Activated CD4-positive, alpha-beta memory T cell treated with anti-CD3 and anti-CD28 coated beads for 36 hours (primary cell): ENCODE measurements at regions of chr1 and their contacts with region 1.

Region 1: DNA sequence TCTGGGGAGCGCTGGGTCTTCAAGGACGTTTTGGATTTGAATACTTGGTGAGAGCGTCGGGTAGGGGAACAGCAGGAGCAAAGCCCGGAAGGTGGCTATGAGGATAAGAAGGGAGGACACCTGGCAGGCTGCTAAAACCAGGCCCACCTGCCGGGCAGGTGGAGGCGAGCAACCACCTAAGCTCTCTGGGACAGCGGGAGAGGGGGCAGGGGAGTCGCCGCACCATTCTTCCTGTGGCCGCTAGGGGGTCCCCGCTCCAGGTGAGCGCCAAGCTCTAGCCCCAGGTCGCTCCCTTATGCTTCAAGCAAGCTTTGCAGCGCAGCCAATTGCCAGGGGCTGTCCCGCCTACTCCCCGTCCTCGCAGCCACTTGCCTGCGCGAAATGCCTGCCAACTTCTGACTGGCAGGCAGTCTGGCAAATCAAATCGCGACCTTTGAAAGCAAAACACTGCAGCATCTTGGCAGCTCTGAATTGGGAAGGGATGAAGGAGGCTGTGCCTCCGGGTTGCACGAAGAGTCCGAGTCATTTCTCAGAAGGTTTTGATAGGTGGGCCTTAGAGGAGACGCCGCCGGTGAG is at the start of gene NIPAL3:
- DNase-seq: peak; percentile 99
- H3K4me3 Mint-ChIP-seq: peak within 1 kb of the TSS; percentile 98
- H3K27ac Mint-ChIP-seq: peak within 1 kb of the TSS; percentile 89
- H3K4me1 Mint-ChIP-seq: peaks cover 51% of the 10 kb centered on the region
- H3K27me3 Mint-ChIP-seq: no peaks in the 10 kb centered on the region
- total RNA-seq, gene NIPAL3: 39.3 to 42.4 TPM

Region 2: DNA sequence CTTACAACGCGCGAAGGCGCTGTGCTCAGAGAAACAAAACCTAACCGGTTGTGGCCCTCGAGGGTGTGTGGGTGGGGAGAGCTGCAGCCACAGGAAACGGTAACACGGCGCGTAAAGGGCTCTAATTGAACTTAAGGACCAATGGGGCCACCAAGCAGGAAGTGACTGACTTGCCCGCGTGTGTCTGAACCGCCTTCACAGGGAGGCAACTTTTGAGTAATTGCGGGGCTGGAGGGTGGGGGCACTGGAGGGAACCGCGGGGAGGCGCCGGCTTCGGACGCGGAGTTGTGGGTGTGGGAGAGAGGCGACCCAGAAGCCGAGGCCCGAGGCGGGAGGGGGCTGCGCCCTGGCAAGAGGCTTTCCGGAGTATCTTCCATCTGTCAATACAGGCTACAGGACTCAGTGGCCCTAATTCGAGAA is 456.4 kb before region 1 on chr1:
- CTCF ChIA-PET with region 1: no interaction called
- POLR2A ChIA-PET with region 1: interaction called, 3 read pairs
- intact Hi-C with region 1: loop called (anchors 10 kb)
- DNase-seq: peak; percentile 97
- H3K4me3 Mint-ChIP-seq: peak overlapping the region; percentile 100
- H3K27ac Mint-ChIP-seq: peak overlapping the region; percentile 100
- H3K4me1 Mint-ChIP-seq: peaks cover 53% of the 10 kb centered on the region
- H3K27me3 Mint-ChIP-seq: no peaks in the 10 kb centered on the region

Region 3: DNA sequence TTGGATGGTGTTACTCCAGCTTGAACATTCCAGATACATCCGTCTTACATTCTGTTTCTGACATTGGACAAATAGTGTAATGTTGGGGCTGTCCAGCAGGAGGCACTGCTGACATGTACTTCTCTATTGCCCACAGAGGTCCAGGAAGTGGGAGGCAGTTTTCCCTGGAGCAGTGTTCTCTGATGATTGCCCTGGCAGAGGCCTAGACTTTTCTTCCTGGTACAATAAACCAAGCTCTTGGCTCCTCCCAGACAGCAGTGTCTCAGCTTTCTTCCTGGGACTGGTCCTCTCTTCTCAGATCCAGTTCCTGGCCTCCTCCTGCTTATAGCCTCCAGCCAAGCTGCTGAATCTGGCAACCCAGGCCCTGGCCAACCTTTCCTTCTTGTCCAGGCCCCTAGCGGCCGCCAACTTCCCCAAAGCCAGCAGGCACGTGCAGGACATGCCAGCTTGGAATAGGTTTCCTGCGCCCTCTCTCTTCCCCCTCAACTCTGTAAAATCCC is 213.4 kb before region 1 on chr1:
- CTCF ChIA-PET with region 1: interaction called, 32 read pairs
- POLR2A ChIA-PET with region 1: no interaction called
- intact Hi-C with region 1: no loop called
- DNase-seq: peak; percentile 76
- H3K4me3 Mint-ChIP-seq: no peak overlapping the region
- H3K27ac Mint-ChIP-seq: no peak overlapping the region
- H3K4me1 Mint-ChIP-seq: peaks cover 23% of the 10 kb centered on the region
- H3K27me3 Mint-ChIP-seq: peaks cover 3% of the 10 kb centered on the region

Region 4: GRCh38 chr1:24426744-24427544 is 11.5 kb after region 1 on chr1:
- CTCF ChIA-PET with region 1: interaction called, 34 read pairs
- POLR2A ChIA-PET with region 1: interaction called, 3 read pairs
- intact Hi-C with region 1: no loop called
- DNase-seq: no peak
- H3K4me3 Mint-ChIP-seq: no peak overlapping the region
- H3K27ac Mint-ChIP-seq: no peak overlapping the region
- H3K4me1 Mint-ChIP-seq: peaks cover 34% of the 10 kb centered on the region
- H3K27me3 Mint-ChIP-seq: no peaks in the 10 kb centered on the region

Region 5: DNA sequence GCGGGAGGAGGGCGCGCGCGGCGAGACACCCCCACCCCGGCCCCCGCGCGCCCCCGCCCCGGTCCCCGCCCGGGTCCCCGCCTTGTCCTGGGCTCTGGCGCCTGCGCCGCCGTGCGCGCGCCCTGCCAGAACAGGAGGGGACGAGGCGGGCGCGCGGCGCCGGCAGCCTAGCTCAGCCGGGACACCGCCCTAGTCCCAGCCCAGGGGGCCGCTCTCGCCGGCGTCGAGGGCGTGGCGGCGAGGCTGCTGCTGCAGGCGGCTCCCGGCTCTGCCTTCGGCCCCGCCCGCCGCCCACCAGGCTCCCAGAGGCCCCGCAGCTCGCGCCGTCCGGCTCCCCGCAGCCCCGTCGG is 87.3 kb after region 1 on chr1 and contains the start of gene RCAN3:
- CTCF ChIA-PET with region 1: interaction called, 22 read pairs
- POLR2A ChIA-PET with region 1: interaction called, 36 read pairs
- intact Hi-C with region 1: loop called (anchors 1 kb)
- DNase-seq: peak; percentile 92
- H3K4me3 Mint-ChIP-seq: peak within 1 kb of the TSS; percentile 98
- H3K27ac Mint-ChIP-seq: peak within 1 kb of the TSS; percentile 99
- H3K4me1 Mint-ChIP-seq: peaks cover 61% of the 10 kb centered on the region
- H3K27me3 Mint-ChIP-seq: no peaks in the 10 kb centered on the region
- total RNA-seq, gene RCAN3: 71.3 to 78.8 TPM

Region 6: GRCh38 chr1:24541711-24542346 is 126.4 kb after region 1 on chr1:
- CTCF ChIA-PET with region 1: interaction called, 25 read pairs
- POLR2A ChIA-PET with region 1: interaction called, 9 read pairs
- intact Hi-C with region 1: loop called (anchors 1 kb)
- DNase-seq: peak; percentile 58
- H3K4me3 Mint-ChIP-seq: no peak overlapping the region
- H3K27ac Mint-ChIP-seq: peak overlapping the region; percentile 93
- H3K4me1 Mint-ChIP-seq: peaks cover 65% of the 10 kb centered on the region
- H3K27me3 Mint-ChIP-seq: no peaks in the 10 kb centered on the region

Region 7: GRCh38 chr1:24642481-24643361 is 227.3 kb after region 1 on chr1 and contains the start of gene SRRM1:
- CTCF ChIA-PET with region 1: interaction called, 7 read pairs
- POLR2A ChIA-PET with region 1: interaction called, 6 read pairs
- intact Hi-C with region 1: loop called (anchors 1 kb)
- DNase-seq: peak; percentile 100
- H3K4me3 Mint-ChIP-seq: peak within 1 kb of the TSS; percentile 96
- H3K27ac Mint-ChIP-seq: peak within 1 kb of the TSS; percentile 98
- H3K4me1 Mint-ChIP-seq: peaks cover 53% of the 10 kb centered on the region
- H3K27me3 Mint-ChIP-seq: no peaks in the 10 kb centered on the region
- total RNA-seq, gene SRRM1: 225 to 227 TPM